Aorta (tissue), 5 donors: ENCODE measurements at regions of chr3 and their contacts with region 1.

Region 1: GRCh38 chr3:52155912-52156311 is 1.7 kb upstream of the POC1A start:
- DNase-seq: peak in 1 of 2 donors; percentile 13
- ATAC-seq: no peak
- H3K4me3 ChIP-seq: no peak overlapping the region
- H3K27ac ChIP-seq: no peak overlapping the region
- H3K4me1 ChIP-seq: no peaks in the 10 kb centered on the region
- H3K27me3 ChIP-seq: no peaks in the 10 kb centered on the region

Region 2: DNA sequence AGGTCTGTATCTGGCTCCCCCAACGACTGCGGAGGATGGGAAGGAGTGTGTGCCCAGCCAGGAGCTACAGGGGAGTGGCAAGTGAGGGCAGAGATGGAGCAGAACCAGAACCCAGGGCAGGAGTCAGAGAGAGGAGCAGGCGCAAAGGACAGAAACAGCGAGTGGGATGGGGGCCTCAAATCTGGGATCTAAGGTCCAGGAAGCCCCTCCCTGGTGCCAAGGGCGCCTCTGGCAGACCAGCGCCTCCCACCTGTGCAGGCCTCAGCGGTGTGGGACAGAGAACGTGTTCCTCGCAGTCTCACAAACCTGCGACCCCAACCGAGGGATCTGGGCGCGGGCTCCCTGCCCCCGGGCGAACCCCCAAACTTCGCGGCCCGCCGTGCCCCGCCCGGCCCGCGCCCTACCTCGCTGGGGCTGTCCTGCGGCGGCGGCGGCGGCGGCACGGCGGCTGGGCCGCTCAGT is 189.0 kb before region 1 on chr3:
- intact Hi-C with region 1: no loop called
- DNase-seq: no peak
- ATAC-seq: no peak
- H3K4me3 ChIP-seq: peak overlapping the region; percentile 59 to 68
- H3K27ac ChIP-seq: peak overlapping the region in 1 of 2 donors; percentile 65
- H3K4me1 ChIP-seq: peaks cover 0 to 2% of the 10 kb centered on the region in 2 donors
- H3K27me3 ChIP-seq: no peaks in the 10 kb centered on the region

Region 3: DNA sequence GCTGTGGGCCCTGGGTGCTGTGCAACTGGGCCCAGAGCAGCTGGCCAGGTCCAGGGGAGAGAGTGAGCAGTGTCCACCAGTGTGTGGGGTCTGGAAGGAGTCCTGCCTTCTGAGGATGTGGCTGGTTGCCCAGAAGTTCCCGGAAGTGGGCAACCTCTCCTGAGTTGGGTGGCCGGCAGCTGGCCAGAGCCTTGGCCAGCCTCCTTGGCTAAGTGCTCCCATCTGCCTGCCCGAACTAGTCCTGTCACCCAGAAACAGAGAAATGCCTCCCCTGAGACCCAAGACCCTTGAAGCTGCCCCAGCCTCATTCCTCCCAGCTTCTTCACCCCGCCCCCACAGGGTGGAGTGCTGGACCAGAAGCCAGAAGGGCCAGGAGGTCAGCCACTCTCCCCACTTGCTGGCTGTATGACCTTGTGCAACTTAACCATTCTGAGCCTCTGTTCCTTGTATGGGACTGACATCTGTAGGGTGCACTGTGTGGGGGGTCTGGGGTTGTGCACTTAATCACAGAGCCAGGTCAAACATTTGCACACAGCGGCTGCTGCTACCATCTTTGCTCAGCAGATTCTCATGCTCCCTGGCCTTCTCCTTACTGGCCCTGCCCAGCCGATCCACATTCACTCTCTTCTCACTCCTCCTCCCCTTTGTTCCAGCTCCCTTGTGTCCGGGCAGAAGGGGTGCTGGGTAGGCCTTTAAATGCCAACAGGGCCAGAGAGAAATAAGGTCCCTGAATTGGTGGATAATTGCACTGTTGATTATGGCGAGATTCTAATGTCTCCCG is 34.6 kb after region 1 on chr3:
- intact Hi-C with region 1: loop called in 1 of 2 experiments (anchors 2 kb)
- DNase-seq: peak; percentile 76 to 88
- ATAC-seq: peak; percentile 75
- H3K4me3 ChIP-seq: no peak overlapping the region
- H3K27ac ChIP-seq: peak overlapping the region in 1 of 2 donors; percentile 32
- H3K4me1 ChIP-seq: peaks cover 0 to 2% of the 10 kb centered on the region in 2 donors
- H3K27me3 ChIP-seq: no peaks in the 10 kb centered on the region